ENCODE measurements at regions of chr2 and their contacts with region 1.

Region 1: DNA sequence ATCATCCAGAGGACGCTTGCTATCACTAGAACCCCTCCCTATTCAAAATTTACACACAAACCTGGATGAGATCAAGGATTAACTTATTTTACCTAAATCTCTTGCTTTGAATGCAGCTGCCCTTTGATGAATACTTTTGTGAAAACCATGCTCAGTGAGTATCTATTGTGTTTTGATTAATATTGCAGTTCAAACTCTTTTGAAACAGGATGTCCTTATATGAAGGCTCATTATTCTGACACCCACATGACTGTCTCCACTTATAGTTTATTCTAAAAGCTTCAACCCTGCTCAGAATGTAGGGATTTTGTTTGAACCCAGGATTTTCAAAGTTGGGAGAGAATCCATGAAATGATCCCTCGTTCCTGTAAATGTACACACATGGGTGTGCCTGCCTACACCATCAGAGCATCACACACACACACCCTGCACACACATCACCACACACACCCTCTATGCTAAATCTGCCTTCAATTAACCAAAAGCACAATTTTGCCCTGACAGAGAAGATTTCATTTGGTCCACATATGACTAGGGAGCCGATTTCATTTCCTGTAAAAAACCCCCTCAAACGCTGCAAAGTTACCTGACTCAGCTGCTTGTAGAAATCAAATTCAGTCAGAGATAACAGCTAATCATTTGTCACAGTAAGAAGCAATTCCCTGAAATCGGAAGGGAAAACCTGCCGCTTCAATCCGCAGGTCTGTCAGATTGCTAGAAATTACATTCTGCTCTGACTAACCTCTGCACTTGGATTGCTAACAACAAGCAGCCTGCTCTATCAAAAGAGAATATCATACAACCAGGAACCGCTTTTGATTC is 65.2 kb downstream of the ZEB2 start:
- DNase-seq: peak; percentile 21
- H3K4me3 Mint-ChIP-seq: no peak overlapping the region
- H3K27ac Mint-ChIP-seq: no peak overlapping the region
- H3K4me1 Mint-ChIP-seq: peaks cover 27% of the 10 kb centered on the region
- H3K27me3 Mint-ChIP-seq: peaks cover 33% of the 10 kb centered on the region

Region 2: DNA sequence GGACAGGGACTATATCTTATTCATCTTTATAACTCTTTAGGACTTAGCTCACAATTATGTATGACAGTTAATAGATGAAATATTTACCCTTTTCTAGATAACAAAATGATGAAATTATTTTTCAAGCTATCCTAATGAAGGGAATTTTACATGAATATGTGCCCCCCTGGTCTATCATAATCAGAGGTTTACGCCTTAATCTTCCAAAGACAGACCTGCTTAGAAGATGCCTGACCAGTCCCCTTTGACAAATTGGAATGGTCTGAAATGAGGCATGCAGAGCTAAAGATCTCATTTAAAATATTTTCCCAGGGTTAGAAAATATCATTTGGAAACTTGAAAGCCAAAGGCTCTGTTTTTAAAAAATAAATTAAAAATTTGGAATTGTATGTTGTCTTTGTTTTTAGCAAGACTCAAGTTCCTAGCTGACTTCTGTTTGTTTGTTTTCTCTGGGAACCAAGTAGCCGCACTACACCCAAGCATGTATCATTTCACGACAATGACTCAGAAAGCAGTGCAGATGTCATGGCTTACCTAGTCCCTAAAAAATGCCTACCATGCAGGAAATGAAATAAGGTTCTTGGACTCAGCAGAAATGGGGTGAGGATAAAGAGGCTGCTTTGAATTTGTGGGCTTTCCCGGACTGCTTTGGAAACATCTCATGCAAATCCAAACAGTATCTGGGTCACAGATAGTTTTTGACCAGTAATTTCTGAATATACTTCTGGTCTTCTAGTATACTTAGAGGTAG is 96.9 kb before region 1 on chr2:
- CTCF ChIA-PET with region 1: no interaction called
- intact Hi-C with region 1: loop called (anchors 1 kb)
- DNase-seq: peak; percentile 47
- H3K4me3 Mint-ChIP-seq: no peak overlapping the region
- H3K27ac Mint-ChIP-seq: no peak overlapping the region
- H3K4me1 Mint-ChIP-seq: peaks cover 18% of the 10 kb centered on the region
- H3K27me3 Mint-ChIP-seq: no peaks in the 10 kb centered on the region